Activated T-helper 2 cell treated with anti-CD3 and anti-CD28 coated beads, Interferon-gamma antibody, Interleukin-2, Interleukin-4, amounts not matched to agents 10 μg/mL and 5 μg/mL and 100 μg/mL, durations not matched to agents 14 hours and 24 hours and 36 hours (primary cell): ENCODE measurements at regions of chr20 and their contacts with region 1.

Region 1: GRCh38 chr20:40962730-40963504 is 65.7 kb upstream of the TOP1 start:
- DNase-seq: peak; percentile 64
- H3K4me3 Mint-ChIP-seq: no peak overlapping the region
- H3K27ac Mint-ChIP-seq: no peak overlapping the region
- H3K4me1 Mint-ChIP-seq: peaks cover 11% of the 10 kb centered on the region
- H3K27me3 Mint-ChIP-seq: peaks cover 3% of the 10 kb centered on the region

Region 2: DNA sequence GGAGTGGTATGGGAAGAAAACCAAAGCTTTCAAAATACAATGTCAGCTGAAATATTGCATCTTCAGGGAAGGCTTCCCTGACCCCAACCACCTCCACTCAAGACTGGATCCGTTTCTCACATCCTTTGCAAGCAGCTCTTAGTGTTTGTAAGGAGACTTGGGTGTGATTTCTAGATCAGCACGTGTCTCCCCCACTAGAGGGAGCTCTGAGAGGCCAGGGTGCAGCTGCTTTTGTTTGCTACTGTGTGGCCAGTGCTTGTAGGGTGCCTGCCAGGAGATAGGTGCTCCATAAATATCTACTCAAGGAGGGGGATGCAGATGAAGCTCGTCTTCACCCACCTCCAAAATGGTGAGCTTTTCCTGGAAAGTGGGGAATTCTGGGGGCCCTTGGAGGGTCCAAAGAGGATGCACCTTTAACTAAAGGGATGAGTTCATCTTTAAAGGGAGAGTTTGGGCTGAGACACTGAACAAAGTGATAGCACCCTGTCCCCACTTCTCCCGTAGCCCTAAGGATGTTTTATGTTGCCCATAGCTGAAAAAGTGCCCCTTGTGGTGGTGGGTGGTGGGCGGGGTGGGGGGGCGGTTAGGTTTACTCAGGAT is 221.3 kb before region 1 on chr20:
- intact Hi-C with region 1: loop called (anchors 1 kb)
- DNase-seq: peak; percentile 31
- H3K4me3 Mint-ChIP-seq: no peak overlapping the region
- H3K27ac Mint-ChIP-seq: no peak overlapping the region
- H3K4me1 Mint-ChIP-seq: no peaks in the 10 kb centered on the region
- H3K27me3 Mint-ChIP-seq: peaks cover 10% of the 10 kb centered on the region

Region 3: DNA sequence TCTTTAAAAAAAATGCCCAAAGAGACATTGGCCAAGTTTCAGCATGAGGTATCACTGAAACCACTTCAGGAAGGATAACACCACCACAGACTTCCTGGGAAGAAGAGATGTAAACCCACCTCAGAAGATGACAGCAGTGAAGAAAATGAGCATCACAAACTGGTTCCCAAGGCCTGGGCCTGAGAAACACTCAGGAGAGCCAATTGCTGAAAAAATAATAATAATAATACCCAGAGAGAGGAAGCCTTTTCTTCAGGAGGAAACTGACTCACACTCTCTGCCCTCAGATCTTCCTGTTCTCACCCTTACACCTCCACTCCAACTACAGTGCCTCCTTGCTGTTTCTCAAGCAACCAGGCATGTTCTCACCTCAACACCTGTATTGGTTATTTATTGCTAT is 205.8 kb before region 1 on chr20:
- intact Hi-C with region 1: loop called (anchors 5 kb)
- DNase-seq: no peak
- H3K4me3 Mint-ChIP-seq: no peak overlapping the region
- H3K27ac Mint-ChIP-seq: no peak overlapping the region
- H3K4me1 Mint-ChIP-seq: peaks cover 30% of the 10 kb centered on the region
- H3K27me3 Mint-ChIP-seq: peaks cover 3% of the 10 kb centered on the region

Region 4: GRCh38 chr20:41095110-41095969 is 132.4 kb after region 1 on chr20:
- intact Hi-C with region 1: loop called (anchors 1 kb)
- DNase-seq: peak; percentile 35
- H3K4me3 Mint-ChIP-seq: no peak overlapping the region
- H3K27ac Mint-ChIP-seq: no peak overlapping the region
- H3K4me1 Mint-ChIP-seq: peaks cover 9% of the 10 kb centered on the region
- H3K27me3 Mint-ChIP-seq: no peaks in the 10 kb centered on the region

Region 5: DNA sequence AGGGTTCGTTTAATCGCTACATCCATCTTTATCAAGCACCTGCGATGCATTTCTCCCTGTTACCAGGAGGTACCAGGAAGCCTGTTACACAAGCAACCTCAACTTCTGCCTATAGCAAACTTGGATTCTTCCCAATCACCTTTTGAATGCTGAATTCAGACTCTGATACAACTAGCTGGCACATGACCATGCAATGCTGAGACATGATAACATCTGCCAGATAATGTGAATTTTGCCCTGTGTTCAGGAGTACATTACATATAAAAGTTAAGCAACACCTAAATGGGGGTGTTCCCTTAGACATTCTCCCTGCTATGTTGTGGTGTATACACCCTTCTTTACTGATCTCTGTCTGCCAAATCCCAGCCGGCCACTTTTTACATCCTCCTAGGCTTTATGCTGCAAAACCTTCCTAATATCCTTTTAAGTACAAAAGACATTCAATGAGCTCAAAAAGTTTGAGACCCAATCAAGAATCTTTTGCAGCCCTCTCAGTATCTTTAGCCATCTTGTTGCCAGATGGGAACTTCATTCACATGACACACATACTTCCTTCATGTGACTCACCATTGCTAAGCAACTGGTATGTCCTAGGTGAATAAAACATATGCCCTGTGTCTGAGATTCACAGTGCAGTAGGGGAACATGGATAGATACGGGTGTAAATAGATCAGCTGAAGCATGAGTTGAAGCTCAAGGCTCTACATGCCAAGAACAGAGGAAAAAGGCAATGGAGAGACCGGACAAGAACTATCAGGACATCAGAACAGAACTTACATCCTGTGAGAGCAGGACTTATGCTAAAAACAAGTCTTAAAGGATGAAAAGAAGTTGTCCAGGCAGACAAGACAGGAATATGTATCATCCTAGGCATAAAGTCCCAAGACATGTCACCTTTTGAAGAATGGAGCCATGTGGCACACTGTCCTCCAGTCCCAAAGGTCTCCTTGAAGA is 270.3 kb after region 1 on chr20:
- intact Hi-C with region 1: loop called (anchors 2 kb)
- DNase-seq: no peak
- H3K4me3 Mint-ChIP-seq: no peak overlapping the region
- H3K27ac Mint-ChIP-seq: no peak overlapping the region
- H3K4me1 Mint-ChIP-seq: peaks cover 35% of the 10 kb centered on the region
- H3K27me3 Mint-ChIP-seq: no peaks in the 10 kb centered on the region

Region 6: DNA sequence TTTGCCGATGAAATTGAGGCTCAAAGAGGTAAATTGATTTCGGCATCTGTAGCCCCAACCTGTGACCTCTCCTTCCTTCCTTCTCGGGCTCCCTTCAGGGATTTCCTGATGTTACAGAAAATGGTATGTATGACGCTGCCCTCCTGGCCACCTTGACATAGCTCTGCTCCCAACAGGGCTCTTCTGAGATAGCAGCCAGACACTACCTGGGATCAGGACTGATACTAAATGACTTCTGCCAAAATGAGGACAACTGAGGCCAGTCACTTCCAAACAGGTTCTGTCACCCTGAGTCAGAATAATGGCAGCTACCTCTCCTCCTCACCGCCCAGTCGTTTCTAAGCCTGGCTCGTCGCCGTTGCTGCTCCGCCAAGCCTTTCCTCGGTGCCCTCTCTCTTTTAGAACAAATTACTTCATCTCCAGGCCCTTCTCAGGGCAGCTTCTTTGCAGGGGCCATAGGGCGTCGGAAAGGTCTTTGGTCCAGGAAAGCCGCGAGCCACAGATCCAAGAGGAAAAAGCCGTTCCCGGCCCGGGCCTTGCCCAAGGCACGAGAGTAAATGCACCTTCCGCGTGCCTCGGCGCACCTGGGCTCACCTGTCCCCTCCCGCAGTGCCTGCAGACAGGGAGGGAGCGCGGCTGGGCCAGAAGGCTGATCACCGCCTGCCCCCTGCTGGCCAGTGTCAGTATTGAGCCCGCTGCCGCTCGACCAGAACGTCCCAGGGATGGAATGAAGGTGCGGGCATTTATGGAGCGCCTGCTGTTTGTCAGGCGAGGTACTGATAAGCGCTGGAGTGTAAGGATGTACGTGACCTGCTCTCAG is 376.8 kb after region 1 on chr20:
- intact Hi-C with region 1: loop called (anchors 1 kb)
- DNase-seq: peak; percentile 77
- H3K4me3 Mint-ChIP-seq: peak overlapping the region; percentile 77
- H3K27ac Mint-ChIP-seq: no peak overlapping the region
- H3K4me1 Mint-ChIP-seq: peaks cover 10% of the 10 kb centered on the region
- H3K27me3 Mint-ChIP-seq: peaks cover 8% of the 10 kb centered on the region